Activated CD4-positive, alpha-beta T cell treated with anti-CD3 and anti-CD28 coated beads, Interleukin-2, amount 10 ng/mL, durations not matched to agents 24 days and 14 days (primary cell): ENCODE measurements at regions of chr12 and their contacts with region 1.

Region 1: GRCh38 chr12:93785262-93786010 is 108.3 kb downstream of the CRADD start:
- DNase-seq: peak; percentile 84
- H3K4me3 Mint-ChIP-seq: peak overlapping the region; percentile 39
- H3K27ac Mint-ChIP-seq: peak overlapping the region; percentile 88
- H3K4me1 Mint-ChIP-seq: peaks cover 53% of the 10 kb centered on the region
- H3K27me3 Mint-ChIP-seq: no peaks in the 10 kb centered on the region

Region 2: DNA sequence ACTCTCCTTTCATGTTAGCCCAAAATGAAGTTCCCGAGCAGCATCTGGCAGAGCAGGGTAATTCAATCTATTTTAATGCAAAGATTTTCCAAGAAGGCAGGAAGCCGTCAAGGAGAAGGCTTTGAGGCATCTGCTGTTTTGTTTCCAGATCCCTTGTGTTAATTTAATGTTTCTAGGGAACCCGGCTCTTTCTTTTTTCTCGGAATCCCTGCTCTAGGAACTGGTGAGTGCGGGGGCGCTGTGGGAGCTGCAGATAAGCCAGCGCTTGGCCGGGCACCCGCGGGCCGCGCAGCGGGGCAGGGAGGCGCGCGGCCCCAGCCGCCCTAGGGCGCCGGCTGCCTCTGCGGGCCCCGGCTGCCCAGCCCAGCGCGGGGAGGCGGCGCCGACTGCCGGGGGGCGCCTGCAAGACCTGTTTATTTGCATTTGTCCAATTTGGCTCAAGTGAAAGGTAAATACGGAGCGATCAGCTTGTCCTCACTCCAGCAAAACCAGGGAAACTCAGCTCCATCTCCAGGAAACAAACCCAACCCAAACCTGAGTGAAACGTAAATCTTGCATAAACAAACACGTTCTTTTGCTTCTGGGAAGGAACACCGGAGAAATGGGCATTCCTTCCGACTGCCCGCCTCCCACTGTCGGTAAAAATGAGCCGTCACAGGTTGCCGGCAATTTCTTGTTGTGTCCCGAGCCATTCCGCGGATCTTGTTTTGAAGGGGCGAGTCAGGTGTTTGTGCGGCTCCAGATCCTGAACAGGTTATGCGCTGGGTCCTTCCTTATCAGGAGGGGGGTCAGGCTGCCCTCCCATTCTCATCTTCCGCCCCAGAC is 43.1 kb before region 1 on chr12:
- intact Hi-C with region 1: loop called (anchors 5 kb)
- DNase-seq: peak; percentile 87
- H3K4me3 Mint-ChIP-seq: peak overlapping the region; percentile 91
- H3K27ac Mint-ChIP-seq: peak overlapping the region; percentile 91
- H3K4me1 Mint-ChIP-seq: peaks cover 26% of the 10 kb centered on the region
- H3K27me3 Mint-ChIP-seq: no peaks in the 10 kb centered on the region

Region 3: GRCh38 chr12:93773122-93773871 is 12.1 kb before region 1 on chr12:
- intact Hi-C with region 1: loop called (anchors 1 kb)
- DNase-seq: no peak
- H3K4me3 Mint-ChIP-seq: no peak overlapping the region
- H3K27ac Mint-ChIP-seq: peak overlapping the region; percentile 34
- H3K4me1 Mint-ChIP-seq: peaks cover 38% of the 10 kb centered on the region
- H3K27me3 Mint-ChIP-seq: no peaks in the 10 kb centered on the region

Region 4: GRCh38 chr12:93802698-93803423 is 17.4 kb after region 1 on chr12:
- intact Hi-C with region 1: no loop called
- DNase-seq: no peak
- H3K4me3 Mint-ChIP-seq: no peak overlapping the region
- H3K27ac Mint-ChIP-seq: no peak overlapping the region
- H3K4me1 Mint-ChIP-seq: peaks cover 26% of the 10 kb centered on the region
- H3K27me3 Mint-ChIP-seq: no peaks in the 10 kb centered on the region

Region 5: DNA sequence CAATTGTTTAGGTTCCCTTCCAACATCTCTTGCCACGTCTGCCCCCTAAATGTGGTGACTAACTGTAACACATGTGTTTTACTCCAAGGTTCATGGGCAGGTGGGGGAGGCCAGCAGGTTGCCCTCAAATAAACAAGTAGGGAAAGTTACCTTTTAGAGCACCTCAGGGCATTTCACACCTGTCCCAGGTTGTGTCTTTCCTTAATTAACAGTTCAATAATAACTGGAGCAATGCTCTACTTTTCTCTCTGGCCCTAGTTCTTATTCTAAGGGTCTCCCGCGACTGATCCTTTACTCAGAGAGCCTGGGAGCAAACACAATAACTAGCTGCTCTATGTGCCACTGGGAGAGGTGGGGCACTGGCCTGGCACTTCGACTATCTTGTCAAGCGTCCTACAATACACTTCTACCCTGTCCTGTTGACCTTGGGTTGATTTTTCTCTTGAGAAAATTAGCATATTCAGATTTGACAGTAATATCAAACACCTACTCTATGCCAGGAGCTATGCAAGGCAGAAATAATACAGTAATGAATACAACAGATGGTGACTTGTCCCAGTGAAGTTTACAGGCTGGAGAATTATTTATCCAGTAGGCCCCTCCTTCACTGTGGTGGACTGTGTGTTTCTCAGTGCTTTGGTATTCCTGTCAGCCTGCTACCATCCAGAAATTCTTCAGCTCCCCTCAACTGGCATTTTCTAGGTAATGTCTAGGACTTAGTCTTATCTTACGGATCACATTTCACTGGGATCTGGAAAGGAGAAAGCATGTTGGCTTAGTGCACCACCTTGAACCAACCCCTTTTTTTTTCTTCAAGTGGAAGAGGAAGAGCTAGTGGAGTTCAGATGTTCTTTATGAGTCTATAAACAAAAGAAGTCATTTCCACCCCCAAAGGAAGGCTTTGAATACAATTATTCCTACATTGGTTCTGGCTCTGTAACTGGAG is 94.3 kb after region 1 on chr12:
- intact Hi-C with region 1: loop called (anchors 2 kb)
- DNase-seq: peak; percentile 54
- H3K4me3 Mint-ChIP-seq: peak overlapping the region; percentile 66
- H3K27ac Mint-ChIP-seq: peak overlapping the region; percentile 87
- H3K4me1 Mint-ChIP-seq: peaks cover 31% of the 10 kb centered on the region
- H3K27me3 Mint-ChIP-seq: no peaks in the 10 kb centered on the region

Region 6: GRCh38 chr12:94230357-94230905 is 445.0 kb after region 1 on chr12:
- intact Hi-C with region 1: no loop called
- DNase-seq: no peak
- H3K4me3 Mint-ChIP-seq: peak overlapping the region; percentile 51
- H3K27ac Mint-ChIP-seq: peak overlapping the region; percentile 55
- H3K4me1 Mint-ChIP-seq: peaks cover 6% of the 10 kb centered on the region
- H3K27me3 Mint-ChIP-seq: no peaks in the 10 kb centered on the region